Transverse colon (tissue), 4 donors: ENCODE measurements at regions of chr13 and their contacts with region 1.

Region 1: DNA sequence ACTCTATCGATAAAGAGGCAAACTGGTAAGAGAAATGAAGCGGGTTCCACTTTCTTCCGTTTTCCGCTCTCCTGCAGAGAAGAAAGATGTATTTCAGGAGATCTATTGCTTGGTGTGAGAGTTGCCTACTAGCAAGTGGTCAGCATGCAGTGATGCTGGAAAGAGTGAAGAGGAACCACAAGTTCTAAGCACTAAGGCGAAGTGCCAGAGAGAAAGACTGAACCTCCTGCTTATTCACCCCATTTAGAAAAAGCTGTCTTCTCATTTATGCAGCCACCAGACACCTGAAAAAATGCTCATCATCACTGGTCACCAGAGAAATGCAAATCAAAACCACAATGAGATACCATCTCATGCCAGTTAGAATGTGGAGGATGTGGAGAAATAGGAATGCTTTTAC is 78.7 kb upstream of the GPC6 start:
- DNase-seq: no peak
- H3K4me3 ChIP-seq: no peak overlapping the region
- H3K27ac ChIP-seq: no peak overlapping the region
- H3K4me1 ChIP-seq: peaks cover 0 to 6% (median 2%) of the 10 kb centered on the region in 4 donors
- H3K27me3 ChIP-seq: no peaks in the 10 kb centered on the region
- CTCF ChIP-seq: no peak
- EP300 ChIP-seq: no peak
- POLR2A ChIP-seq: no peak

Region 2: GRCh38 chr13:93080587-93080986 is 67.4 kb before region 1 on chr13:
- in situ Hi-C with region 1: no loop called
- intact Hi-C with region 1: loop called (anchors 2 kb)
- DNase-seq: no peak
- H3K4me3 ChIP-seq: no peak overlapping the region
- H3K27ac ChIP-seq: no peak overlapping the region
- H3K4me1 ChIP-seq: no peaks in the 10 kb centered on the region
- H3K27me3 ChIP-seq: no peaks in the 10 kb centered on the region
- CTCF ChIP-seq: no peak
- EP300 ChIP-seq: no peak
- POLR2A ChIP-seq: no peak